ENCODE measurements at regions of chr6 and their contacts with region 1.

Region 1: GRCh38 chr6:131519670-131520436 is 53.2 kb upstream of the ARG1 start:
- DNase-seq: peak; percentile 76
- H3K4me3 Mint-ChIP-seq: no peak overlapping the region
- H3K27ac Mint-ChIP-seq: peak overlapping the region; percentile 24
- H3K4me1 Mint-ChIP-seq: peaks cover 13% of the 10 kb centered on the region
- H3K27me3 Mint-ChIP-seq: no peaks in the 10 kb centered on the region

Region 2: DNA sequence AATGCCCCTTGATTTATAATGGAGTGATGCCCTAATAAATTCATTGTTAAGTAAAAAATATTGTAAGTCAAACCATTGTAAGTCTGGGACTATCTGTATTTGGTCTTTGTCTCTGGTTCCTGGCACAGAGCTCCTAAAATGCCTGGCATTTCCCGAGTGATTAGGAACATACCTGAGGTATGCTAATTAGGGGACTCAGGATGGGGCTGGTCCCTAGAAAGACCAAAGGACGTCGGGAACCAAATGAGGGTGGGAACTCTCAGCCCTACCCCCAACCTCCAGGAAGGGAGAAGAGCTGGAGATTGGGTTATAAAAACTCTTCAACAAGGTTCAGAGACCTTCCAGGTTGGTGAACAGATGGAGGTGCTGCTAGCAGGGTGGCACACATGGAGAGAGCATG is 29.4 kb before region 1 on chr6:
- CTCF ChIA-PET with region 1: interaction called, 10 read pairs
- intact Hi-C with region 1: no loop called
- DNase-seq: no peak
- H3K4me3 Mint-ChIP-seq: no peak overlapping the region
- H3K27ac Mint-ChIP-seq: no peak overlapping the region
- H3K4me1 Mint-ChIP-seq: no peaks in the 10 kb centered on the region
- H3K27me3 Mint-ChIP-seq: no peaks in the 10 kb centered on the region

Region 3: DNA sequence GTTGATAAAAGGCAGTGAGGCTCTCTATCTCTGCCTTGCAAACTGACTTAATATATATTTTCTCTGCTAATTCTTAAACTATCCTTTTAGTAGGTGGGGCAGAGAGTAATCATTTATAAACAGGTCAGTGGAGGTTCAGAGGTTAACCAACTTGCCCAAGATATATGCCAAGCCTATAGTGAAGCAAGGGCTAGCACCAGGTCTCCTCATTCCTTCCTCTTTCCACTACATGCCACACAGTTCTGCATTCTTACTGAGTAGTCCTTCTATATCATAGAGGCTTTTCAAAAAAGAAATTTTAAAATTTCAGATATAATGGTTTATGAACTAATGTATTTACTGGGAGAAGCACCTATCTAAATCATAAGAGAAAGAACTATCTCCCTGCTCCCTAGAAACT is 61.7 kb after region 1 on chr6:
- CTCF ChIA-PET with region 1: no interaction called
- intact Hi-C with region 1: no loop called
- DNase-seq: no peak
- H3K4me3 Mint-ChIP-seq: no peak overlapping the region
- H3K27ac Mint-ChIP-seq: no peak overlapping the region
- H3K4me1 Mint-ChIP-seq: no peaks in the 10 kb centered on the region
- H3K27me3 Mint-ChIP-seq: no peaks in the 10 kb centered on the region

Region 4: DNA sequence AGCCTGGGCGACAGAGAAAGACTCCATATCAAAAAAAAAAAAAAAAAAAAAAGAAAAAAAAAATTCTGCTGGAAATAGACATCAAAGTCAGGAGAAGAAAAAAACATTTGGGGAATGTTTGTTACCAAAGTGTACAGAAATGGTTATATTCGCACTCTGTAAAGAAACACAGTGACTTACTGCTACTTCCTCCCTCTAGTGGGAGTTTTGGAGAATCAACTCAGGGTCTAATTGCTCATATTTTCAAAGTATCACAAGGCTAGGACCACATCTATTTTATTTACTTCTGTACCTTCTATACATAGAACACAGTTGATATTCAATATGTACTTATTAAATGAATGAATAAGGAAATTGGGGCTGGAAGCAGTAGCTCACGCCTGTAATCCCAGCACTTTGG is 77.6 kb after region 1 on chr6:
- CTCF ChIA-PET with region 1: no interaction called
- intact Hi-C with region 1: loop called (anchors 2 kb)
- DNase-seq: no peak
- H3K4me3 Mint-ChIP-seq: no peak overlapping the region
- H3K27ac Mint-ChIP-seq: no peak overlapping the region
- H3K4me1 Mint-ChIP-seq: no peaks in the 10 kb centered on the region
- H3K27me3 Mint-ChIP-seq: no peaks in the 10 kb centered on the region

Region 5: GRCh38 chr6:131909408-131910218 is 389.8 kb after region 1 on chr6:
- CTCF ChIA-PET with region 1: interaction called, 3 read pairs
- intact Hi-C with region 1: loop called (anchors 2 kb)
- DNase-seq: peak; percentile 87
- H3K4me3 Mint-ChIP-seq: no peak overlapping the region
- H3K27ac Mint-ChIP-seq: no peak overlapping the region
- H3K4me1 Mint-ChIP-seq: peaks cover 5% of the 10 kb centered on the region
- H3K27me3 Mint-ChIP-seq: peaks cover 11% of the 10 kb centered on the region